ENCODE measurements at regions of chr6 and their contacts with region 1.

Region 1: DNA sequence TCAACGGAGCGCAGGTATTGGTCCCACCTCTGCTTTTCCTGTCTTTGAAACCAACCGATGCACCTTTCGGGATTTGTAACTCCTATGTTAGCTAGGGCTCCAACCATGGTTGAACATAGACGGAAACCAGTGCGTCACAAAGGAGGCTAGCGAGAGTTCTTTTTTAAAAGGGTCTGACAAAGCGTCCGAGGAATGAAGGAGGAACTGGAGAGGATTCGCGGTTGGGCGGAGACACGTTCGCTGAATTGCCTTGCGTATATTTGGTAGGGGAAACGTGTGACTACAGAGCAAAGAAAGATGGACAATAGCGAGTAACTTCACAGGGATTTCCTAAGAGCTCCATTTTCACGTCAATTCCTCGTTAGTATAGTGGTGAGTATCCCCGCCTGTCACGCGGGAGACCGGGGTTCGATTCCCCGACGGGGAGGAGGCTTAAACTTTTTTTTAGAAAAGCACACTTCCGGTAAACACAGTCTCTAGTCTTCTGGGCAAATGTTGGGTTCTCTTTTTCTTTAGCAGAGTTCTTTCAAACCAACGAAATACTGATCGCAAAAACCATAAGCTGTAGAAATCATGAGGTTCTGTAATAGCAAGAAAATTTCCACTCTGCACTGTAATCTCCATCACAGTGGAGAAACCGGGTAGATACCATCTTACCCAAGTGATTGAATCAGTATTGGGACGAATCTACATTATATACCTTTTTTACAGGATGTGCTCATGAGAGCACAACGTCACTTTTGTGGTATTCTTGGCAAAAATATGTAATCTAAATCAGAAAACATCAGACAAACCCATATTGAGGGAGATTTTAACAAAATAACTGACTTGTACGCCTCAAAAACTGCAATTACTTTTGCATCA is 6.6 kb upstream of the ZNF184 start:
- DNase-seq: peak; percentile 84 to 97 (median 95)
- ATAC-seq: peak; percentile 83
- H3K4me3 ChIP-seq: peak overlapping the region; percentile 95
- H3K4me3 Mint-ChIP-seq: no peak overlapping the region
- H3K27ac ChIP-seq: peak overlapping the region; percentile 97
- H3K27ac Mint-ChIP-seq: no peak overlapping the region
- H3K4me1 ChIP-seq: peaks cover 9 to 12% of the 10 kb centered on the region in 2 donors
- H3K4me1 Mint-ChIP-seq: peaks cover 0 to 9% (median 5%) of the 10 kb centered on the region in 7 donors
- H3K27me3 ChIP-seq: no peaks in the 10 kb centered on the region
- H3K27me3 Mint-ChIP-seq: peaks cover 0 to 17% (median 0%) of the 10 kb centered on the region in 5 donors

Region 2: DNA sequence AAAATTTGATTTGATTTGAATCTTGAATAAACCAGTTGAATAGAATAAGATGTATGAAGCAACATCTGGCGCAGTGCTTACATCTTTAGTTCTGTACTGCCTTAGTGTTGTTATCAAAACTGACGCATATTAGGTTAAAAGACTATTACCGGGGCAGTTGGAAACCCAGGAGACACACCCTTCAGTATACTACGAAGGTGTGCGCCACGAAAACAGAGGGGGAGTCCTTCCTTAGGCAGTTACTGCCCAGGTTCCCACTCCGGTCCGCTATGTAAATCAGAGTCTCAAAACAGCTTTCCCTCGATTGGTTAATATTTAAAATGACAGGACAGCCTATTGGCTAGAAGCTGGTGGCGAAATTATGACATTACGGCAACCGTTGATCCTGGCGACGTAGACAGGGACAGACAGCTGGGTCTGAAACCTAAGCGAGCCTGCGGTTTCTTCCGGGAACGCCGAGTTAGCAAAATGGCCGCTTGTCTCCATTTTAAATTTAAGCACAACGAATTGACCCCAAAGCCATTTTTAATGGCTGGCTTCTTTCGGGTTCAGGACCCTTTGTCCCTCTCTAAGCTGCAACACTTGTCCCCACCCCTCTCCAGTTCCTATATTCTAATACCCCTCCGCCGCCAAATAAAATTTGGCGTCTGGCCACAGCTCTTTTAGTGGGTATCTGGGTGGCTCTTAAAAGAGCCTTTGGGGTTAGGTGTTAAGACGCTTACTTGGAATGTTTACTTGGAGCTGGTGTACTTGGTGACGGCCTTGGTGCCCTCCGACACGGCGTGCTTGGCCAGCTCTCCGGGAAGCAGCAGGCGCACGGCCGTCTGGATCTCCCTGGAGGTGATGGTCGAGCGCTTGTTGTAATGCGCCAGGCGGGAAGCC is 1356.5 kb before region 1 on chr6:
- CTCF ChIA-PET with region 1: no interaction called
- POLR2A ChIA-PET with region 1: interaction called, 9 read pairs
- intact Hi-C with region 1: loop called (anchors 2 kb)
- DNase-seq: peak; percentile 68 to 99 (median 96)
- ATAC-seq: peak; percentile 78
- H3K4me3 ChIP-seq: peak overlapping the region; percentile 94
- H3K4me3 Mint-ChIP-seq: peak overlapping the region; percentile 92 to 100 (median 98)
- H3K27ac ChIP-seq: peak overlapping the region; percentile 86
- H3K27ac Mint-ChIP-seq: peak overlapping the region; percentile 97 to 100 (median 99)
- H3K4me1 ChIP-seq: peaks cover 18 to 23% of the 10 kb centered on the region in 2 donors
- H3K4me1 Mint-ChIP-seq: peaks cover 22 to 54% (median 30%) of the 10 kb centered on the region in 7 donors
- H3K27me3 ChIP-seq: no peaks in the 10 kb centered on the region
- H3K27me3 Mint-ChIP-seq: peaks cover 0 to 21% (median 0%) of the 10 kb centered on the region in 5 donors

Region 3: DNA sequence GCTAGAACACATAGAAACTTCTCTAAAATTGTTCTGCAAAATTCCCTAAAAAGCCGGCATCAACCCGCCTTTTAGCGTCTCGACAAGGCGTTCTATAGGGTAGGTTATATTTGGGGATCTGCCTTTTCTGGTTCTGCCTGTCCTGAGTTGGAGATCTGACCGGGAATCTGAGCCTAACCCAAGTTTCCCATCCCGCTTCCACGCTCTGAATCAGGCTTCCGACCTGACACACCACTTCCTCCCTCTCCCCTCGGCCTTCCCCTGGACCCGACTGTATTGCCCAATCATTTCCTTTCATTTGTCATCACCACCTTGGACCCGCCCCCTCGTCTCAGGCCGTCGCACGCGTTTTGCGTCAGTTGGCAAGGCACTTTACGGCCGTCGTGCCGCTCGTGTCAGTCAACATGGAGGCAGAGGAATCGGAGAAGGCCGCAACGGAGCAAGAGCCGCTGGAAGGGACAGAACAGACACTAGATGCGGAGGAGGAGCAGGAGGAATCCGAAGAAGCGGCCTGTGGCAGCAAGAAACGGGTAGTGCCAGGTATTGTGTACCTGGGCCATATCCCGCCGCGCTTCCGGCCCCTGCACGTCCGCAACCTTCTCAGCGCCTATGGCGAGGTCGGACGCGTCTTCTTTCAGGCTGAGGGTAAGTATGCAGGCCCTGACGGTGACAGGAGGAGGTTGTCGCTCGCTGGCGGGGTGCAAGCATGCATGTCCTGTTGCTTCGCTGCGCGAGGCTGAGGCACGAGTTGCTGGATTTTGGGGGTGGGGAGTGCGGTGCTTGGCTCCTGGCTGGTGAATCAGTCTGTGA is 882.8 kb before region 1 on chr6 and contains the start of gene ABT1:
- CTCF ChIA-PET with region 1: no interaction called
- POLR2A ChIA-PET with region 1: no interaction called
- intact Hi-C with region 1: loop called in 1 of 2 experiments (anchors 2 kb)
- DNase-seq: peak; percentile 87 to 96 (median 95)
- ATAC-seq: peak; percentile 95
- H3K4me3 ChIP-seq: peak within 1 kb of the TSS; percentile 81
- H3K4me3 Mint-ChIP-seq: no peak within 1 kb of the TSS
- H3K27ac ChIP-seq: peak within 1 kb of the TSS; percentile 89
- H3K27ac Mint-ChIP-seq: peak within 1 kb of the TSS in 1 of 9 donors; percentile 92
- H3K4me1 ChIP-seq: peaks cover 17 to 22% of the 10 kb centered on the region in 2 donors
- H3K4me1 Mint-ChIP-seq: peaks cover 5 to 20% (median 10%) of the 10 kb centered on the region in 7 donors
- H3K27me3 ChIP-seq: peaks cover 8 to 14% of the 10 kb centered on the region in 2 donors
- H3K27me3 Mint-ChIP-seq: peaks cover 3 to 28% (median 16%) of the 10 kb centered on the region in 5 donors
- total RNA-seq, gene ABT1: 23.3 to 37.5 (median 35.0) TPM

Region 4: DNA sequence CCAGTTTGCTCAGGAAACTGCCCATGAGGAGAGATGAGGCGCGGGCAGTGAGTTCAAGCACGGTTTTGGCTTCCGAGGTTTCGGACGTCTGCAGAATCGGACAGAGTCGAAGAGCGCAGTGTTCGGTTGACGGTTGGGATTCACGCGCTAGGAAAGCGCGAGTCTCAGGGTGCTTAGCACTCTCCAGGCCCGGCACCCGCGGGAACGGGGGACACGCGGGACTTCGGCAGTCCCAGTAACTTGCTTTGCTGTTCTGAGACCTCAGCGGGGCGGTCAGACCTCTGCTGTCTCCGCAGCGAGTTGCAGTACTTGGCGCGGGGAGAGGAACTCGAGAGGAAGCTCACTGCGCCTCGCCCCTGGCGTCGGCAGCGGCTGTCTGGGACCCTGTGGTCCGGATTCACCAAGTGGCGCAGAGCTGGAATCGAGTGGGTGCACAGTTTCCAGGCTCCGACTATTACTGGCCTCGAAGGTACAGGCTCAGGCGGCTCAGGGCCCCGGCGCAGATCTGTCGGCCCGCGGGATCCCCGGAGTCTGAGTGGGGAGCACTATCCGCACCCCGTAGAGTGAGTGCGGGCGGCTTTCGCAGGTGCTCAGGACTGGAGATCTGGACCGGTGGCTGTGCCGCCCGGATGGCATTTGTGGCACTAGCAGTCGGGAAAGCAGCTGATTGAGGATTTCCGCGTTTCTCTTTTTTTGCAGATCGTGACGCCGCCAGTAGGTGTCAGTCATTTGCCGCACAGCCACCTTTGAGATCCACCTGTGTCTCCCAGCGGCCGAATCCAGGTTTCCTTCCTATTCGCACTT is 167.2 kb before region 1 on chr6 and contains the start of gene POM121L2:
- CTCF ChIA-PET with region 1: interaction called, 4 read pairs
- POLR2A ChIA-PET with region 1: interaction called, 3 read pairs
- intact Hi-C with region 1: loop called (anchors 2 to 10 kb)
- DNase-seq: peak in 8 of 9 donors; percentile 26 to 61 (median 56)
- ATAC-seq: peak; percentile 66
- H3K4me3 ChIP-seq: peak within 1 kb of the TSS; percentile 80
- H3K4me3 Mint-ChIP-seq: peak within 1 kb of the TSS; percentile 76 to 86 (median 83)
- H3K27ac ChIP-seq: no peak within 1 kb of the TSS
- H3K27ac Mint-ChIP-seq: peak within 1 kb of the TSS in 2 of 9 donors; percentile 15 to 25
- H3K4me1 ChIP-seq: peaks cover 0 to 6% of the 10 kb centered on the region in 2 donors
- H3K4me1 Mint-ChIP-seq: peaks cover 0 to 13% (median 4%) of the 10 kb centered on the region in 7 donors
- H3K27me3 ChIP-seq: peaks cover 4 to 14% of the 10 kb centered on the region in 2 donors
- H3K27me3 Mint-ChIP-seq: peaks cover 63 to 81% (median 73%) of the 10 kb centered on the region in 5 donors
- total RNA-seq, gene POM121L2: not detected

Region 5: DNA sequence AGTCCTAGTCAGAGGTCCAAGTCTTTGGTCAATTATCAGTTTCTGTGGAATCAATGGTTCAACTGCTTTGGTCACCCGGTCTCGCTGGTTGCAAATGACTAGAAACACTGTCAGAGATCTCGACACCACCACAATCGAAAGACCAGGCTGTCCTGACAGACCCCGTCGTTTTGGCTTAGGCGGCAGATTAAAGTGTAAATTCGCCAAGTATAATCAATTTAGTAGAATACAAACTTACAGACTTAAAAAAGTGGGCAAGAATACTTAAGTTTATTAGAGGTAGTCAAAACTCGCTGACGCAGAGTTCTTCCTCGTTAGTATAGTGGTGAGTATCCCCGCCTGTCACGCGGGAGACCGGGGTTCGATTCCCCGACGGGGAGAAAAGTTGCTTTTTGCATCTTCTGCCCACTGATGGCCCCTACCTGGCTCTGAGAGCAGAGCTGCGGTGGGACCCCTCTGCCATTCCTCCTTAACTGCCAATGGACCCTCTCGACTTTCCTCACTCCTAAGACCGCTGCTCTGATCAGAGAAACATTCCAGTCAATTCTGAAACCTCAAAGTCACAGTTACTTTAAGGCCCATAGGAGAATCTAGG is 24.0 kb after region 1 on chr6:
- CTCF ChIA-PET with region 1: interaction called, 3 read pairs
- POLR2A ChIA-PET with region 1: interaction called, 24 read pairs
- intact Hi-C with region 1: loop called (anchors 1 kb)
- DNase-seq: peak; percentile 73 to 86 (median 80)
- ATAC-seq: peak; percentile 75
- H3K4me3 ChIP-seq: peak overlapping the region; percentile 61
- H3K4me3 Mint-ChIP-seq: peak overlapping the region; percentile 85 to 99 (median 91)
- H3K27ac ChIP-seq: peak overlapping the region; percentile 57
- H3K27ac Mint-ChIP-seq: peak overlapping the region; percentile 82 to 97 (median 91)
- H3K4me1 ChIP-seq: peaks cover 6% of the 10 kb centered on the region in 2 donors
- H3K4me1 Mint-ChIP-seq: peaks cover 15 to 41% (median 36%) of the 10 kb centered on the region in 7 donors
- H3K27me3 ChIP-seq: no peaks in the 10 kb centered on the region
- H3K27me3 Mint-ChIP-seq: peaks cover 5 to 62% (median 11%) of the 10 kb centered on the region in 5 donors

Region 6: GRCh38 chr6:27864906-27865849 is 385.6 kb after region 1 on chr6:
- CTCF ChIA-PET with region 1: no interaction called
- POLR2A ChIA-PET with region 1: interaction called, 5 read pairs
- intact Hi-C with region 1: loop called in 1 of 2 experiments (anchors 1 kb)
- DNase-seq: peak; percentile 56 to 93 (median 89)
- ATAC-seq: peak; percentile 85
- H3K4me3 ChIP-seq: peak overlapping the region; percentile 74
- H3K4me3 Mint-ChIP-seq: peak overlapping the region; percentile 85 to 99 (median 97)
- H3K27ac ChIP-seq: peak overlapping the region; percentile 71
- H3K27ac Mint-ChIP-seq: peak overlapping the region; percentile 88 to 98 (median 95)
- H3K4me1 ChIP-seq: peaks cover 8 to 25% of the 10 kb centered on the region in 2 donors
- H3K4me1 Mint-ChIP-seq: peaks cover 22 to 64% (median 46%) of the 10 kb centered on the region in 7 donors
- H3K27me3 ChIP-seq: no peaks in the 10 kb centered on the region
- H3K27me3 Mint-ChIP-seq: peaks cover 0 to 16% (median 0%) of the 10 kb centered on the region in 5 donors

Region 7: GRCh38 chr6:28838634-28839442 is 1359.3 kb after region 1 on chr6:
- CTCF ChIA-PET with region 1: no interaction called
- POLR2A ChIA-PET with region 1: no interaction called
- intact Hi-C with region 1: loop called in 1 of 2 experiments (anchors 1 kb)
- DNase-seq: peak; percentile 66 to 89 (median 81)
- ATAC-seq: peak; percentile 79
- H3K4me3 ChIP-seq: peak overlapping the region; percentile 83
- H3K4me3 Mint-ChIP-seq: peak overlapping the region; percentile 86 to 99 (median 96)
- H3K27ac ChIP-seq: peak overlapping the region; percentile 60
- H3K27ac Mint-ChIP-seq: peak overlapping the region; percentile 83 to 98 (median 93)
- H3K4me1 ChIP-seq: peaks cover 8 to 11% of the 10 kb centered on the region in 2 donors
- H3K4me1 Mint-ChIP-seq: peaks cover 13 to 31% (median 20%) of the 10 kb centered on the region in 7 donors
- H3K27me3 ChIP-seq: no peaks in the 10 kb centered on the region
- H3K27me3 Mint-ChIP-seq: peaks cover 17 to 66% (median 25%) of the 10 kb centered on the region in 5 donors